ENCODE measurements at regions of chr11 and their contacts with region 1.

Region 1: GRCh38 chr11:112795142-112795815 is 165.9 kb upstream of the NCAM1 start:
- DNase-seq: peak in 1 of 3 donors; percentile 50
- ATAC-seq: peak; percentile 56
- H3K4me3 ChIP-seq: no peak overlapping the region
- H3K4me1 ChIP-seq: no peaks in the 10 kb centered on the region
- CTCF ChIP-seq: no peak

Region 2: DNA sequence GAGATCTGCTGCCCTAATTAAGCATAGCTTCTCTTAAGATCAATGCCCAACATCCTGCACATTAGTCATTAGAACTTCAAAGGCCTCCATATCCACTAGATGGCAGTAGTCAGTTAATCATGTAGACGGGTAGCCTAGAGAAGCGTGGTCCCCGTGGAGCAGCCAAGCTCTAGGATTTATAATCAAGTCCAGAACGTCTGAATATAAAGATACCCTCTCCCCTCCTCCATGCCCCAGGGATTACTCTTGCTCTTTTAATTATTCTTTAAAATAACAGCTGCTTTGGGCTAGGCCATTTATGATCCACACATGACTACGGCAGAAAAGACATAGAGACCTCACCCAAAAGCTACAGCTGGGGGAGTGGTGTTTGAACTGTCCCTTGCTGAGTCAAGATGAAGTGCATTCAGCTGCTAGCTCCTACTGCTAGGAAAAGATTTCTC is 207.0 kb before region 1 on chr11:
- intact Hi-C with region 1: loop called in 1 of 2 experiments (anchors 10 kb)
- DNase-seq: peak; percentile 24 to 68 (median 49)
- ATAC-seq: peak; percentile 76
- H3K4me3 ChIP-seq: no peak overlapping the region
- H3K4me1 ChIP-seq: no peaks in the 10 kb centered on the region
- CTCF ChIP-seq: no peak

Measured in mucosa of descending colon (tissue), 3 donors.